ENCODE measurements at regions of chr5 and their contacts with region 1.

Region 1: GRCh38 chr5:81301271-81302015 is at the start of gene ZCCHC9:
- DNase-seq: peak; percentile 95
- H3K4me3 ChIP-seq: peak within 1 kb of the TSS; percentile 46 to 76 (median 66)
- H3K27ac ChIP-seq: peak within 1 kb of the TSS; percentile 68
- H3K4me1 ChIP-seq: peaks cover 16% of the 10 kb centered on the region
- H3K27me3 ChIP-seq: no peaks in the 10 kb centered on the region
- CTCF ChIP-seq: peak in 1 of 2 donors; percentile 14
- POLR2A ChIP-seq: peak; percentile 97
- total RNA-seq, gene ZCCHC9: 22.2 and 23.9 TPM in 2 replicates

Region 2: DNA sequence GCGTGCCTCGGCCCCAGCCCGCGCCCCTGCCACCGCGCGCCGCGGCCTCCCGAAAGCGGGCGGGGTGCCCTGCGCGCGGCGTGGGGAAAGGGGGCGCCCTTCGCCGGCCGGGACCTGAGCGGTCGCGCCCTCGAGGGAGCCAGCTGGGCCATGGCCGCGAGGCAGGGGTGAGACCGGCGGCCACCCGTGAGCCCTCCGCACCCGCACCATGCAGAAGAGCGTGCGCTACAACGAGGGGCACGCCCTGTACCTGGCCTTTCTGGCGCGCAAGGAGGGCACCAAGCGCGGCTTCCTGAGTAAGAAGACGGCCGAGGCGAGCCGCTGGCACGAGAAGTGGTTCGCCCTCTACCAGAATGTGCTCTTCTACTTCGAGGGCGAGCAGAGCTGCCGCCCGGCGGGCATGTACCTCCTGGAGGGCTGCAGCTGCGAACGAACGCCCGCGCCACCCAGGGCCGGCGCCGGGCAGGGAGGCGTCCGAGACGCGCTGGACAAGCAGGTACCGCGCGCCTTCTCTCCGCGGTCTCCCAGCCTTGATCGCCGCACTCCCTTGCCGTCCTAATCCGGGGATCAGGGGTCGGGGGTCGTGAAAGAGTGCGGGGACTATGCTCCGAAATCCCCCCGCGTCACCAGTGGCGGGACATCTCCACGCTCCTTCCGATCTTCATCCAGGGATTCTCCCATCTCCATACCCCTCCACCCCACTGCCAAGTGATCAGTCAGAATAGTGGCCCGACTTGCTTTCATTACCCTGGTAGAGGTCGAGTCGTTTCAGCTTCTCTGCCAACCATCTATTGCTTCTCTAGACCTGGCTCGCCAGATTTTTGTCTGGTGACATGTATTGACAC is 340.7 kb before region 1 on chr5:
- CTCF ChIA-PET with region 1: no interaction called
- POLR2A ChIA-PET with region 1: no interaction called
- dilution Hi-C with region 1: no loop called
- intact Hi-C with region 1: loop called (anchors 10 kb)
- DNase-seq: peak; percentile 25
- H3K4me3 ChIP-seq: peak overlapping the region; percentile 20 to 49 (median 35)
- H3K27ac ChIP-seq: no peak overlapping the region
- H3K4me1 ChIP-seq: peaks cover 35% of the 10 kb centered on the region
- H3K27me3 ChIP-seq: peaks cover 17 to 35% of the 10 kb centered on the region in 2 experiments
- CTCF ChIP-seq: peak in 1 of 2 donors; percentile 1
- POLR2A ChIP-seq: no peak

Region 3: GRCh38 chr5:81513982-81514381 is 212.5 kb after region 1 on chr5:
- CTCF ChIA-PET with region 1: no interaction called
- POLR2A ChIA-PET with region 1: no interaction called
- dilution Hi-C with region 1: no loop called
- intact Hi-C with region 1: loop called (anchors 10 kb)
- DNase-seq: peak; percentile 30
- H3K4me3 ChIP-seq: no peak overlapping the region
- H3K27ac ChIP-seq: no peak overlapping the region
- H3K4me1 ChIP-seq: peaks cover 8% of the 10 kb centered on the region
- H3K27me3 ChIP-seq: no peaks in the 10 kb centered on the region
- CTCF ChIP-seq: no peak
- POLR2A ChIP-seq: no peak

Region 4: DNA sequence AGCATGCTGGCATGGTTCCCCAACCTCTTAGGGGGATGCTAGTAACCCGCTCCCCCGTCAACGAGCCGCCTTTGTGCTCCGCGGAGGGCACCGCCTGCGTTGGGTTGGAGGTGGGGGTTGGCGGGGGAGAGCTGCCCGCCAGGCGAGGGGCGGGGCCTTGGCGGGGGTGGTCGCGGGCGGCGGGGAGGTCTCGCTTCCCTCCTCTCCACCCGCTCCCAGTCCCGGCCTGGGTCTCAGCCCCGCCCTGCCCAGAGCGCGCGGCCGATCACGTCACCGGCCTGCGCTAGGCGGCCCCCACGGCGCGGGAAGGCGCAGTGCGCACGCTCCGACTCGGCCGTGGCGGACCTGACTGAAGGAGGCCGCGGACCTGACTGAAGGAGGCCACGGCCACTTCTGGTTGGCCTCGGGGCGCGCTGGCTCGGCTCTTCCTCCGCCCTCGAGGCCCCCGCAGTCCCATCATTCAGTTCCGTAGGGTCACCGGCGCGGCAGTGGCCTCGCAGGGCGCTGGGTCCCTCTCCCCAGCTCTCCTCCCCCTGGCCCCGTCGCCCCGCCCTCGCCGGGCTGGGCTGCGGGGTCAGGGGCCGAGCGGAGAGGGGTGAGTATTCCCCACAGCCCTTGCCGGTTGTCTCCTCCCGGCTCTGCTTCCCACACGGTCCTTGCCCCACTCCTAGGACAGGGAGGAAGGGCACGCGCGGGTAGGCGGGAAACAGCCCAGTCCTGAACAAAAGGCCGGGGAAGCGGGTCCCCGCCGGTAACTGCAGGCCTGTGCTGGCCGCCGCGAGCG is 670.5 kb after region 1 on chr5 and contains the start of gene ATG10:
- CTCF ChIA-PET with region 1: no interaction called
- POLR2A ChIA-PET with region 1: no interaction called
- dilution Hi-C with region 1: no loop called
- intact Hi-C with region 1: loop called (anchors 2 kb)
- DNase-seq: peak; percentile 96
- H3K4me3 ChIP-seq: peak within 1 kb of the TSS; percentile 64 to 89 (median 71)
- H3K27ac ChIP-seq: peak within 1 kb of the TSS; percentile 71
- H3K4me1 ChIP-seq: no peaks in the 10 kb centered on the region
- H3K27me3 ChIP-seq: no peaks in the 10 kb centered on the region
- CTCF ChIP-seq: no peak
- POLR2A ChIP-seq: peak; percentile 89
- total RNA-seq, gene ATG10: 3.9 and 5.9 TPM in 2 replicates

Region 5: DNA sequence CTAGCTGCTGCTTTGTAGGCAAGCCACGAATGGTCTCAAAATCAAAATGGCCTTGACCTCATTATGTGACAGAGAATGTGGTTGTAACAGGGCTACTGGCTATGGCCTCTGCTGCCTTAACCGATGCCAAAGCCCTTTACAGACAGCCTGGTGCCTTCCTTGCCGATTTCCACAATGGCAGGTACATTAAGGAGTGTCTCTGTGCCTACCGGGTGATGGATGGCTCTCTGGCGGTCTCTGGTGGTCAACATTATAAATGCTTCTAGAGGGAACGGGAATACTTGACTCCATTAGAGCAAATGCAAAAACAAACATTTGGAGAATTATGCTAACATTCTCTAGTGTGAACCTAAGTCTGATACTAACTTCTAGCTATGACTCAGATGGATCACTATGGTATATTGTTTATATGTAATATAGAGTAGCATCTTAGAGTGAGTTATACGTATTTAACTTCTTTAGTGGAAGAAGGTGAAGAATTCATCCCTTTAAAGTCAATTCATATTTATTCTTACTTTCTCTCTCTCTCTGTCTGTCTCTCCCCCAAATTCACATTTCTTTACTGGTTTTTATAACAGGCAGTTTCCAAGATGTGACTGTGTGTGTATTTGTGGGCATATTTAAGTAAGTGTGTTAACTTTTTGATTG is 924.2 kb after region 1 on chr5:
- CTCF ChIA-PET with region 1: interaction called, 4 read pairs
- POLR2A ChIA-PET with region 1: no interaction called
- dilution Hi-C with region 1: no loop called
- intact Hi-C with region 1: loop called (anchors 1 kb)
- DNase-seq: peak; percentile 78
- H3K4me3 ChIP-seq: no peak overlapping the region
- H3K27ac ChIP-seq: no peak overlapping the region
- H3K4me1 ChIP-seq: peaks cover 2% of the 10 kb centered on the region
- H3K27me3 ChIP-seq: no peaks in the 10 kb centered on the region
- CTCF ChIP-seq: peak; percentile 66 to 85
- POLR2A ChIP-seq: no peak